HCT116 (cell line): ENCODE measurements at regions of chr12 and their contacts with region 1.

Region 1: DNA sequence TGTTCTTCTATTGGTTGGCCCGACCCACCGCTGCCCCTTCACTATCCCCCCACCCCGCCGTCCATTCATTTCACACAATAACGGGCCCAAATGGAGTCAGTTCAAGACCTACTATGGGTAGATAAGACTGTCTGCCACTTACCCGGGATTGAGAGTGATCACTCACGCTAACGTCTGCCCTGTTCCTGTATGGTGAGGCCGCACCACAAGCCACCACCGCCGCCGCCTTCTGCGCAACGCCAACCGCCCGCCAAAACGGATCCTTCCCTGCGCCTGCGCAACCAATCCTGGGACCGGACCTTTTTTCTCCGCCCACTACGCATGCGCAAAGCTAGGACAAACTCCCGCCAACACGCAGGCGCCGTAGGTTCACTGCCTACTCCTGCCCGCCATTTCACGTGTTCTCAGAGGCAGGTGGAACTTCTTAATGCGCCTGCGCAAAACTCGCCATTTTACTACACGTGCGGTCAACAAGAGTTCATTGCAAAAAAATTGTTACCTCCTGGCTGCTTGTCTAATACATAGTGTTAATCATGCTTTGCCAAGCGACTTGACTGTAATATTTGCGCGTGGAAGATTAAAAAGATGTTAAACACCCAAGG is at the start of gene CBX5:
- DNase-seq: peak; percentile 98
- ATAC-seq: peak; percentile 58
- H3K4me3 ChIP-seq: peak within 1 kb of the TSS; percentile 81 to 96
- H3K27ac ChIP-seq: peak within 1 kb of the TSS; percentile 93
- H3K4me1 ChIP-seq: peaks cover 15 to 44% of the 10 kb centered on the region in 2 experiments
- H3K27me3 ChIP-seq: no peaks in the 10 kb centered on the region
- CTCF ChIP-seq: no peak
- POLR2A ChIP-seq: no peak
- RAD21 ChIP-seq: no peak
- total RNA-seq, gene CBX5: 72.3 TPM

Region 2: GRCh38 chr12:54220092-54220557 is 59.8 kb before region 1 on chr12:
- CTCF ChIA-PET with region 1: interaction called, 3 read pairs
- POLR2A ChIA-PET with region 1: interaction called, 5 read pairs
- RAD21 ChIA-PET with region 1: interaction called in 1 of 2 experiments, 4 read pairs
- intact Hi-C with region 1: loop called (anchors 1 kb)
- DNase-seq: peak; percentile 56
- ATAC-seq: peak; percentile 71
- H3K4me3 ChIP-seq: peak overlapping the region; percentile 28 to 47
- H3K27ac ChIP-seq: peak overlapping the region; percentile 37; the same call in 1 of the 2 replicates
- H3K4me1 ChIP-seq: peaks cover 6 to 38% of the 10 kb centered on the region in 2 experiments
- H3K27me3 ChIP-seq: no peaks in the 10 kb centered on the region
- CTCF ChIP-seq: peak; percentile 74 to 95 (median 84)
- POLR2A ChIP-seq: no peak
- RAD21 ChIP-seq: peak; percentile 93

Region 3: GRCh38 chr12:54259194-54260011 is 20.6 kb before region 1 on chr12:
- CTCF ChIA-PET with region 1: interaction called, 3 read pairs
- POLR2A ChIA-PET with region 1: interaction called, 27 read pairs
- RAD21 ChIA-PET with region 1: interaction called in 1 of 2 experiments, 3 read pairs
- intact Hi-C with region 1: no loop called
- DNase-seq: peak; percentile 72
- ATAC-seq: peak; percentile 91
- H3K4me3 ChIP-seq: peak overlapping the region; percentile 60 to 62
- H3K27ac ChIP-seq: peak overlapping the region; percentile 82
- H3K4me1 ChIP-seq: peaks cover 48 to 53% of the 10 kb centered on the region in 2 experiments
- H3K27me3 ChIP-seq: no peaks in the 10 kb centered on the region
- CTCF ChIP-seq: no peak
- POLR2A ChIP-seq: no peak
- RAD21 ChIP-seq: no peak

Region 4: GRCh38 chr12:54294152-54294952 is 14.4 kb after region 1 on chr12:
- CTCF ChIA-PET with region 1: interaction called, 16 read pairs
- POLR2A ChIA-PET with region 1: interaction called, 40 read pairs
- RAD21 ChIA-PET with region 1: no interaction called
- intact Hi-C with region 1: no loop called
- DNase-seq: no peak
- ATAC-seq: peak; percentile 79
- H3K4me3 ChIP-seq: no peak overlapping the region
- H3K27ac ChIP-seq: no peak overlapping the region
- H3K4me1 ChIP-seq: no peaks in the 10 kb centered on the region
- H3K27me3 ChIP-seq: peaks cover 4% of the 10 kb centered on the region; the same call in 1 of the 2 replicates
- CTCF ChIP-seq: peak; percentile 90 to 96 (median 91); a peak in 5 of 6 replicates
- POLR2A ChIP-seq: no peak
- RAD21 ChIP-seq: peak; percentile 90

Region 5: GRCh38 chr12:54306925-54307741 is 27.2 kb after region 1 on chr12:
- CTCF ChIA-PET with region 1: no interaction called
- POLR2A ChIA-PET with region 1: interaction called, 13 read pairs
- RAD21 ChIA-PET with region 1: no interaction called
- intact Hi-C with region 1: no loop called
- DNase-seq: peak; percentile 78
- ATAC-seq: peak; percentile 90
- H3K4me3 ChIP-seq: no peak overlapping the region
- H3K27ac ChIP-seq: no peak overlapping the region
- H3K4me1 ChIP-seq: peaks cover 31 to 32% of the 10 kb centered on the region in 2 experiments
- H3K27me3 ChIP-seq: no peaks in the 10 kb centered on the region
- CTCF ChIP-seq: no peak
- POLR2A ChIP-seq: no peak
- RAD21 ChIP-seq: no peak

Region 6: GRCh38 chr12:54337280-54337842 is 57.4 kb after region 1 on chr12:
- CTCF ChIA-PET with region 1: no interaction called
- POLR2A ChIA-PET with region 1: interaction called, 17 read pairs
- RAD21 ChIA-PET with region 1: no interaction called
- intact Hi-C with region 1: no loop called
- DNase-seq: no peak
- ATAC-seq: no peak
- H3K4me3 ChIP-seq: no peak overlapping the region
- H3K27ac ChIP-seq: no peak overlapping the region
- H3K4me1 ChIP-seq: peaks cover 4 to 9% of the 10 kb centered on the region in 2 experiments; a peak in 3 of 4 replicates
- H3K27me3 ChIP-seq: no peaks in the 10 kb centered on the region
- CTCF ChIP-seq: no peak
- POLR2A ChIP-seq: no peak
- RAD21 ChIP-seq: no peak